ENCODE measurements at regions of chr14 and their contacts with region 1.

Region 1: DNA sequence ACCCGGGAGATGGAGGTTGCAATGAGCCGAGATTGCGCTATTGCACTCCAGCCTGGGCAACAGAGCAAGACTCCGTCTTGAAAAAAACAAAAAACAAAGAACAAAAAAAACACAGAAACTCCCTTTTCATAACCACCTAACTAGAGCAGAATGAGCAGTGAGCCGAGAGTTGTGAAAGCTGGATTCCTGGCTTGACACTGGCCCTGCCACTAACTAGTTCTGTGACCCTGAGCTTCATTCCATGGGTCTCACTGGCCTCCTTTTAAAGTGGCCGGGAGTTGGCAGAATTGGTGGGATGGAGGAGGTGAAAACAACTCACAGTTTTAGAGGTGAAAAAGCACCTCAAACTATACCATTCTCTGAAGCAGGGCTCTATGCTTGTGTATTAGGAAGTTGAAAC is 7.5 kb upstream of the RNASE12 start:
- DNase-seq: no peak
- ATAC-seq: no peak
- H3K4me3 ChIP-seq: no peak overlapping the region
- H3K27ac ChIP-seq: no peak overlapping the region
- H3K4me1 ChIP-seq: no peaks in the 10 kb centered on the region
- H3K27me3 ChIP-seq: no peaks in the 10 kb centered on the region
- CTCF ChIP-seq: no peak
- EP300 ChIP-seq: no peak
- POLR2A ChIP-seq: no peak
- RAD21 ChIP-seq: no peak

Region 2: DNA sequence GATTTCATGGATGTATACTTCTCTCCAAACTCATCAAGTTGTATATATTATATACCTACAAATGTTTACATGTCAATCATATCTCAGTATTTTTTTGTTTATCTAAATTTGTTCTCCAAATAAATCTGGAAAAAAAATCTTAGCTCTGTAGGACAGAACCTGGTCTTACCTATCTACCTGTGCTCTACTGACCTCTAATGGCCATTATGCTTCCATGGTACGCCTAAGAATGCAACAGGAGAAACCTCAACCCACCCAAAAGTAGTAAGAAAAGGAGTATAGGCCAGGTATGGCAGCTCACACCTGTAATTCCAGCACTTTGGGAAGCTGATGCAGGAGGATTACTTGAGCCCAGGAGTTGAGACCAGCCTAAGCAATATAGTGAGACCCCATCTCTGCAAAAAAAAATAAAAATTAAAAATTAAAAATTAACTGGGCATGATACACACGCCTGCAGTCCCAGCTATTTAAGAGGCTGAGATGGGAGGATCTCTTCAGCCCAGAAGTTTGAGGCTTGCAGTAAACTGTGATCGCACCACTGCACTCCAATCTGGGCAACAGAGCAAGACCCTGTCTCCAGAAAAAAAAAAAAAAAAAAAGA is 350.9 kb before region 1 on chr14:
- CTCF ChIA-PET with region 1: no interaction called
- POLR2A ChIA-PET with region 1: no interaction called
- RAD21 ChIA-PET with region 1: no interaction called
- SMC1A ChIA-PET with region 1: no interaction called
- in situ Hi-C with region 1: no loop called
- intact Hi-C with region 1: no loop called
- DNase-seq: no peak
- ATAC-seq: peak; percentile 60
- H3K4me3 ChIP-seq: no peak overlapping the region
- H3K27ac ChIP-seq: no peak overlapping the region
- H3K4me1 ChIP-seq: no peaks in the 10 kb centered on the region
- H3K27me3 ChIP-seq: no peaks in the 10 kb centered on the region
- CTCF ChIP-seq: peak; percentile 16 to 39 (median 28); a peak in 2 of 6 replicates
- EP300 ChIP-seq: no peak
- POLR2A ChIP-seq: no peak
- RAD21 ChIP-seq: peak; percentile 30; the same call in 1 of the 2 replicates

Region 3: DNA sequence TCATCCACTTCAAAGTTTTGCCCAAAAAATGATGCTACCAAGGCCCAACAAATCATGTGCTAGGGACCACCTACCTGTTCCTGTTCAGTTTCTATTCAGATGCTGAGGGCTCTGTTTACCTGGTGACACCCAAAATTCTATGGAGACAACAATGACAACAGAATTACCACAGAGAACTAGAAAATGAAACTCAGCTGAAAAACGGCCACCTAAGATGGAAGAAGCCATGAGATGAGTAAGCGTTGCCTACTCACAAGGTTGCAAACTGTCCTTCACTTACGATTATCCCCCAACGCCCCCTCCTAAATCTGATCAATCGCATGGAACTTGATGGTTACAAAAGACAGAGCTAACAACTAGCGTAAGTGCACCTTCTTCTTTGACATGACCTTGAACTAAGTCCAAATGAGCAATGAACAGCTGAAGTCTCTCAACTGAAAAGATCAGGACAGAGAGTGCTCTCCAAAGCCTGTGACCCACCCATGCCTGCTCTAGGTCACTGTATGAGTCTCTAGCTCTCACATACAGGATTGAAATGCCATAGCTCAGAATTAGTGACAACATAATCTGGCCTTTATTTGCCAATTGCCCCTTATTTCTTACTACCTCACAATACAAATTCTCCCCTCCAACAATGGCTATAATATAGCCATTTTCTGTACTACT is 11.1 kb before region 1 on chr14 and contains the start of gene RNASE11:
- CTCF ChIA-PET with region 1: interaction called, 3 read pairs
- POLR2A ChIA-PET with region 1: no interaction called
- RAD21 ChIA-PET with region 1: no interaction called
- SMC1A ChIA-PET with region 1: interaction called, 10 read pairs
- in situ Hi-C with region 1: no loop called
- intact Hi-C with region 1: no loop called
- DNase-seq: no peak
- ATAC-seq: peak; percentile 27; the same call in 1 of the 3 replicates
- H3K4me3 ChIP-seq: no peak within 1 kb of the TSS
- H3K27ac ChIP-seq: no peak within 1 kb of the TSS
- H3K4me1 ChIP-seq: no peaks in the 10 kb centered on the region
- H3K27me3 ChIP-seq: no peaks in the 10 kb centered on the region
- CTCF ChIP-seq: no peak
- EP300 ChIP-seq: no peak
- POLR2A ChIP-seq: no peak
- RAD21 ChIP-seq: no peak
- polyA plus RNA-seq, gene RNASE11: not detected

Region 4: DNA sequence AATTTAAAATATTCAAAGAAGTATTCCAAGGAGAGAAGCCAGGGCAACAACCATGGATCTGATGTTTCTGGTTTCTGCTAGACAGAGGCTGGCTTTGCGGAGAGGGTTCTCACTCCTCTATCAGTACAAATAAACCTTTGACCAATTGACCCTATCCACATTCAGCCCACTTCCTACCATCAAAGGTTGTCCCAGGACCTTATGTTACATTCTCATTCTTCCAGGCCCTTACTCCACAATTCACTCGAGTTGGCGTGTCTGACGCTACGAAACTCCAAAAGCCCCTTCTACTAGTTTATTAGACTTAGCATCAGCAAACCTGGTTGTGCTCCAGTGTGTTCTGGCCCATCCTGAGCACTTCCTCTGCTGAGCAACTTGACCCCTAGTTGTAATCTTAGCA is 17.3 kb after region 1 on chr14:
- CTCF ChIA-PET with region 1: no interaction called
- POLR2A ChIA-PET with region 1: no interaction called
- RAD21 ChIA-PET with region 1: no interaction called
- SMC1A ChIA-PET with region 1: no interaction called
- in situ Hi-C with region 1: no loop called
- intact Hi-C with region 1: no loop called
- DNase-seq: no peak
- ATAC-seq: no peak
- H3K4me3 ChIP-seq: no peak overlapping the region
- H3K27ac ChIP-seq: no peak overlapping the region
- H3K4me1 ChIP-seq: peaks cover 36% of the 10 kb centered on the region
- H3K27me3 ChIP-seq: no peaks in the 10 kb centered on the region
- CTCF ChIP-seq: no peak
- EP300 ChIP-seq: no peak
- POLR2A ChIP-seq: no peak
- RAD21 ChIP-seq: no peak

Measured in GM12878 (cell line).